ENCODE measurements at regions of chr2 and their contacts with region 1.

Region 1: DNA sequence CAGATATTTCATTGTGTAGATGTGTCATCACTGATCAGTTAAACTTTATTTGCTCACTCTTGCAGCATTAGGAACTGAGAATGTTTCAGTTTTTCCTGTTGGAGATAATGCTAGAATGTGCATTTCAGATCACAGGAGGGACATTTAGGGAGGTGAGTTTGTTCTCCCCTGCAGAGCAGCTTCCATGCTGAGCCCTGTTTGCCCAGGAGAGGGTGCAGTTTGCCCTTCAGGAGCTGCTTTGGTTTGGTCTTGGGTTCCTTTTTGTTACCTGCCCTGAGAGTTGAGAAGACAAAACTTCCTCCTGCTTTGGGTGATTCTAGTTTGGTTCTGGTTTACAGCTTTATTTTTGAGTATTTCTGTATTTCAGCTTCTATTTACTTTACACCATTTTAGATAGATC is 49.9 kb downstream of the DGKD start:
- DNase-seq: peak; percentile 60 to 77
- ATAC-seq: peak; percentile 45 to 71; a peak in 3 of 6 replicates
- H3K4me3 ChIP-seq: no peak overlapping the region
- H3K27ac ChIP-seq: peak overlapping the region; percentile 64 to 82
- H3K4me1 ChIP-seq: peaks cover 74% of the 10 kb centered on the region
- CTCF ChIP-seq: peak; percentile 76
- EP300 ChIP-seq: no peak
- POLR2A ChIP-seq: no peak
- RAD21 ChIP-seq: peak; percentile 80 to 88

Region 2: DNA sequence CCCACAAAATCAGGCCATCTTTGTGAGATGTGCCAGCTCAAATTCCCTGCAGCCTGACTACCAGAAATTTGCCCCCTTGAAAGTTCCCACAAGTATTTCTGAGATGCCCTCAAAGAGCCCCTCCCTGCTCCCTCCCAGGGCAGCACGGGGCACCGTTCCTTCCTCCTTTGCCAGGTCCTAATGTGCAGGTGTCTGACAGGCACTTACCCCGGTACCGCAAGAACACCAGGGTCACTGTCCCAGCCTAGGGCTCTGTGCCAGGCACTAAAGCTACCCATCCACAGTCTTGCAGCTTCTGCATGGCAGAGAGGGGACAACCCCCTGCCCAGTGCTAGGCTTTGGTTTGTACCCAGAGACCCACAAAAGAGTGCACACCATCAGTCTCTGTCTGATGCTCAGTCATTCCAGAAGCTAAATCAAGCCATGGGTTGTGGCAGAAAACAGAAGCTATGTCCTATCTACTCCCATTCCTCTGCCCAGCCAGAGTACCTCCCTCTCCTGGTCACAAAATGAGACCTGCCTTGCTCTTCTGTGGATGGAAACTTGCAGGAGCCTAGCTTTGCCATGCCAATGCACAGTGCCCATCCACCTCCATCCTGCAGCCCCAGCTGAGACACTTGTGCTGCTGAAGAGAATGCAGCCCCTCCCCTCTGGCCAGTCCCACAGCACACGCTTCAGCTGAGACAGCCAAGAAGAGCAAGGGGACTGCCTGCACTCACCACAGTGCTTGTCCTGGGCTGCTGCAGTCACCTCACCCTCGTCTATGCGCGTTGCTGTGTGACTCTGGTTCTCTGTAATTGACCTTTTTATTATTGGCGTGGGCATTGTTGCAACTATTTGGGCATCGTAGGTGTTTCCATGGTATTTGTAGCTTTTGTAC is 295.4 kb before region 1 on chr2:
- CTCF ChIA-PET with region 1: no interaction called
- POLR2A ChIA-PET with region 1: no interaction called
- DNase-seq: no peak
- ATAC-seq: peak in 1 of 2 experiments; percentile 42; a peak in 3 of 6 replicates
- H3K4me3 ChIP-seq: no peak overlapping the region
- H3K27ac ChIP-seq: no peak overlapping the region
- H3K4me1 ChIP-seq: no peaks in the 10 kb centered on the region
- CTCF ChIP-seq: no peak
- EP300 ChIP-seq: no peak
- POLR2A ChIP-seq: no peak
- RAD21 ChIP-seq: no peak

Region 3: GRCh38 chr2:233387667-233388528 is 16.3 kb before region 1 on chr2:
- CTCF ChIA-PET with region 1: interaction called, 16 read pairs
- POLR2A ChIA-PET with region 1: no interaction called
- DNase-seq: peak; percentile 66 to 88
- ATAC-seq: peak; percentile 65 to 78
- H3K4me3 ChIP-seq: peak overlapping the region; percentile 10; the same call in 2 of the 3 replicates
- H3K27ac ChIP-seq: peak overlapping the region; percentile 86 to 92
- H3K4me1 ChIP-seq: peaks cover 74% of the 10 kb centered on the region
- CTCF ChIP-seq: no peak
- EP300 ChIP-seq: peak; percentile 24 to 32; a peak in 2 of 5 replicates
- POLR2A ChIP-seq: no peak
- RAD21 ChIP-seq: no peak

Region 4: DNA sequence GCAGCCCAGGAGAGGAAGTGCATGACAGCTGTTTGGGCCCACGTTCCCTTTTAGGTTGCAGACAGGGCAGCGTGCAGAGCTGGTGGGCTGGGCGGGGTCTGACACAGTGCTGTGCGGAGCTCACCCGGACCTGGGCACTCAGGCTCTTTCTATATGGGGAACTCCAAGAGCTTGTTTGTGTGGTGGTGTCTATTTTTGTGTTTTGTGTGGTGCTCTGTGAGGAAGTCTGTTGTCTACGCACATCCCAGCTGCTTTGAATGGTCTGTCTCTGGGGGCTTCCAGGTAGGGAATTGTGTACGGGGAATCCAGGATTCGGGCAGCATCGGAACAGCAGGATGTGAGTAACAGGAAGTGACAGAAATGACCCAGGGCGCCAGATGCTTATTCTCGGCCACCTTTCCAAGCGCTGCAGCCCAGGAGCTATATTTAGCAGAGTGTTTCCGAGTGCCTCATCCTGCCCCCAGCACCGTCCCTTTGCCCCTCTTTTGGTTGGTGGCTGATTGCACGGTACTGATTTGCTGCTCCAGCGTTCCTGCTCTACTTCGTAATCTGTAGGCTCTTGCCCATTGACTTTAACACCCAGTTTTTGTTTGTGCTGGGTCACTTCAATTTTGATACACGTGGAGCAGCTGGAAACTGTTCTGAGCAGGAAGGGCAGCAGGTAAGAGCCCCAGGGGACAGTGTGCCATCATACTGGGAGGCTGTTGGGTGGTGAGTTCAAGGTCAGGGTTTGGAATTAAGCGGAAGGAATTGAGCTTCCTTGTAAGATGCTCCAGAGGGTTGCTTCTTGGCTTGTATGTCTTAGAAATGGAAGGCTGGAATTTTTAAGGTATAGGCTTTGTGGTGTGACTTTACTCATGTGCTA is 14.8 kb after region 1 on chr2:
- CTCF ChIA-PET with region 1: interaction called, 28 read pairs
- POLR2A ChIA-PET with region 1: no interaction called
- DNase-seq: peak; percentile 47 to 81
- ATAC-seq: peak; percentile 32 to 47; a peak in 5 of 6 replicates
- H3K4me3 ChIP-seq: peak overlapping the region; percentile 47
- H3K27ac ChIP-seq: peak overlapping the region; percentile 95 to 99
- H3K4me1 ChIP-seq: peaks cover 100% of the 10 kb centered on the region
- CTCF ChIP-seq: no peak
- EP300 ChIP-seq: peak in 1 of 2 experiments; percentile 19; a peak in 1 of 5 replicates
- POLR2A ChIP-seq: peak; percentile 22; the same call in 1 of the 2 replicates
- RAD21 ChIP-seq: no peak